ENCODE measurements at regions of chr14 and their contacts with region 1.

Region 1: DNA sequence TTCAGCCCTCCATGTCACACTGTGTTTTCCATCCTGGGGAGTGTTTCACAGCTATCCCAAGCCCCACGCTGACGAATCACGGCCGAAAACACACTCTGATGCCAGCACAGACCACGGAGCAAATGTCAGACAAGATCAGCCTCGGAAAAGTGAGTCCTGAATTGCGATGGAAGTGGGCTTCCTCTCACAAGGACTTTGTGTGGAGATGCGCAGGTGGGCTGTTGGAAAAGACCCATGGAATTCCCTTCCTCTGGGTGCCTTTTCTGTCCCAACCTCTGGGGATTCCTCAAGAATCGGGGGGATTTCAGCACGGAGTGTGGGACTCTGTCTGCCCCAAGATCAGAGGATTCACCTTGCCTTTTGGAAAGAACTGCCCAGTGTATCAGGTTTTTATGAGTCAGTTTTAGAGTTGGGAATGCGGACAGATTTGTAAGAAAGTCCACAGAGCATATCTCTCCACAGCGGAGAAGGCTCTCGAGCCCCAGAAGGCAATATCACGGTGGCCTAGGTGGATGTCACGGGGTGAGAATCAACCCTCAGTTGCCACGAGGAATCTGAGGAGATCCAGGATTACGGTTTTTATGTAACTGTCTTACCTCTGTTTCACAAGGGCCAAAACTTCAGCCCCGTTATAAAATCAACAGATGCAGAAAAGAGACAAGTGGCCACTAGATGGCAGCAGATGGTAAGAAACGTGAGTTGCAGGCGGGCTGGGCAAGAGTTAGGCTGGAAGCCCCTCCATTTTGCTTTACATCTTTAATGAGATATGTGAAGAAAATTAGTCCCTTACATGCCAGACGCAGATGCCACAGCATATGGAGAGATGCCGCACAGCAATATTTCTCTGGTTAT is 201.9 kb downstream of the DAD1 start:
- DNase-seq: peak; percentile 47 to 83
- H3K4me3 ChIP-seq: no peak overlapping the region
- H3K4me1 ChIP-seq: no peaks in the 10 kb centered on the region
- H3K27me3 ChIP-seq: peaks cover 15% of the 10 kb centered on the region

Region 2: GRCh38 chr14:22314181-22314820 is 72.8 kb before region 1 on chr14:
- in situ Hi-C with region 1: loop called (anchors 10 kb)
- DNase-seq: peak; percentile 62 to 63
- H3K4me3 ChIP-seq: no peak overlapping the region
- H3K4me1 ChIP-seq: no peaks in the 10 kb centered on the region
- H3K27me3 ChIP-seq: peaks cover 20% of the 10 kb centered on the region

Region 3: DNA sequence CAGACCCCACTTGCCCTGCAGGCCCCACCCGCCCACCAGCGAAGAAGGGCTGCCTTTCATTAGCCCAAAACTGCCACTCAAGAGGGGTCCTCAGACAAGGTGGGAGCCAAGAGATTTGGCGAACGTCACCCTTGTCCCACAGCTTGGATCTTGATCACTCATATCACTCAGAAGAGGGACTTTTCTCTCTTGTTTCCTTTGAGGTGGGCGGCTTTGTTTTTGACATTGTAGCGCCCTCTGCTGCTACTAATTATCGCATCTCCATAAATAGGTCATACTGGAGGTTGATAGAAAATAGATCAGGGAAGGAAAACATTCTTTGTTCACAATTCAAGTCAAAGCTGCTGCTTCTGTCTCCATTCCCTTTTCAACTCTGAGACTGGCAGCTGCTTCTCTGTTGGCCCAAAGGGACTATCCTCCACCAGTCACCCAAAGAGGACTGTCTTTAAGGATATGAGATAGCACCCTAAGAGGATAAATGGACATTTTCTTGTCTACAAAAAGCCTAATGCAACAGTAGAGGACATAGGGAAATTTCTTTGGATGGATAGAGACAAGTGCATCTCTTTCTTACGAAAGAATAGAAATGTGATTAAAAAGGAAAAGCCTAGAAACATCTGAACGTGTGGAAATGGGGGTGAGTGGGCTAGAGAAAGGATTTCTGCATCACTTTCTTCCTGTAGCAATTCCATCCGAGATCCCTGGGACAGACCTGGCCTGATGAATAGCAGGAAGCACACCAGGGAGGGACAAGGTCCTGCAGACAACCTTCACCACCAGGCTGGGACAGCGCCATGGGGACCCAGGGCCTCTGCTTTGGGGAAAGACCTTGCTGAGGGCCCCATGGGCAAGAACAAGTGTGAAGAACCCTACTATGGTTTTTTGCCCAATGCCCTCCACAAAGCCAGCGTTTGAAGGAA is 86.0 kb after region 1 on chr14:
- in situ Hi-C with region 1: loop called (anchors 5 kb)
- DNase-seq: peak; percentile 65
- H3K4me3 ChIP-seq: no peak overlapping the region
- H3K4me1 ChIP-seq: peaks cover 23% of the 10 kb centered on the region
- H3K27me3 ChIP-seq: no peaks in the 10 kb centered on the region

Region 4: DNA sequence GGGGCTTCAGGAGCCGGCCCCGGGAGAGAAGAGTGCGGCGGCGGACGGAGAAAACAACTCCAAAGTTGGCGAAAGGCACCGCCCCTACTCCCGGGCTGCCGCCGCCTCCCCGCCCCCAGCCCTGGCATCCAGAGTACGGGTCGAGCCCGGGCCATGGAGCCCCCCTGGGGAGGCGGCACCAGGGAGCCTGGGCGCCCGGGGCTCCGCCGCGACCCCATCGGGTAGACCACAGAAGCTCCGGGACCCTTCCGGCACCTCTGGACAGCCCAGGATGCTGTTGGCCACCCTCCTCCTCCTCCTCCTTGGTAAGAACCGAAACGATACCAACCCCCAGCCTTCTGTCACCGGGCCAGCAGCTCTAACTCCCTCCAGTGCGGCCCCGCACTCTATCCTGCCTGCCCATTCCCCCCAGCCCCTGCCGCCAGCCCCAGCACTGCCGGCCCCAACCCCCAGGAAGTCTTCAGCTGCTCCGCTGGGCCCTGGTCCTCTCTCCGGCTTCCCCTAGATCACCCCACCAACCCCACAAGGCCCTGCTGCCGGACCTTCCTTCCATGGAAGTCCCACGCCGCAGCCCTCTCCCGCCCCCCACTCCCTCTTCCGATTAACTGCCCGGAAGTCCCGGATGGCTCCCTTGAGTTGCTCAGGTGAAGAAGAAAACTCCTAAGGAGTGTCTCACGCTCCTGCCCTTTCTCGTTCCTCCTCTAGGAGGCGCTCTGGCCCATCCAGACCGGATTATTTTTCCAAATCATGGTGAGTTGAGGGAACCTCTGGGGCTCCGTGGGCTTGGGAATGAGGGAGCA is 485.1 kb after region 1 on chr14:
- in situ Hi-C with region 1: loop called (anchors 25 kb)
- DNase-seq: peak; percentile 70 to 92
- H3K4me3 ChIP-seq: peak overlapping the region; percentile 74
- H3K4me1 ChIP-seq: peaks cover 13% of the 10 kb centered on the region
- H3K27me3 ChIP-seq: no peaks in the 10 kb centered on the region

Measured in HAP-1 (cell line).